Posterior cingulate gyrus (tissue), 11 donors: ENCODE measurements at regions of chr17 and their contacts with region 1.

Region 1: DNA sequence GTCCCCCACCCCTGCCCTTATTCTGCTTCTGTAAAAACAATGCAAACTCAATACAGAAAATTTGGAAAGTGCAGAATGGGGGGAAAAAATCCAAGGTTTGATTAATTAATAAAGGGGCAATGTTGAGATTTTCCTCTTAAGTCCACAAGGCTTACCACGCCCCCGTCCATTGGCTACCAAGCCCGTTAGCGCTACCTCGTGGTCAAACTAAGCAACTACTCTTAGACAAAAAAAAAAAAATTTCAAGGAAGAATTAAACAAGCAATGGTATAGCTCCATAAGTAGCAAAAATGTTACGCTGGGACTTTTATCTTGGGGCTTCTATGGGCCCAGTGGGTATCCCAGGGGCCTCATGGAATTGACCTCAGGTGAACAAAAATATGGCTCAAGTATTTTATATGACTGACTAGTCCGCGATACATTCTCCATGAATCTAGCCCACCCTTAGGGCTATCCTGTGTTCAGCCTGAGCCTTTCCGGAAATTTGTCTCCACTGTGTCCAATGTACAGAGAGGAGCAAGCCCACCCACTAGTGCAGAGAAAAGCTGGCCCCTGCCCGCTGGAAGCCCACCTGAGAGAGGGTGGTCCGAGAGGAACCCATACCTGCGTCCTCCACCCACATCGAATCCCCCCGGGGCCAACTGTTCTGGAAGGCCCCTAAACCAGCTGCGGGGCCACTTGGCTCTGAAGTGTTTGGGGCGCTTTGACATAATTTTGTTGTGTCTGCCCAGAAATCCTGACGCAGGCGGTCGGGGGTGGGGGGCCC is 19.1 kb upstream of the TEX2 start:
- DNase-seq: peak in 8 of 10 donors; percentile 21 to 91 (median 49)

Region 2: GRCh38 chr17:63919311-63919723 is 362.8 kb before region 1 on chr17:
- intact Hi-C with region 1: loop called (anchors 10 kb)
- DNase-seq: peak in 7 of 10 donors; percentile 18 to 82 (median 44)

Region 3: GRCh38 chr17:64025732-64026294 is 256.3 kb before region 1 on chr17:
- intact Hi-C with region 1: loop called (anchors 5 kb)
- DNase-seq: peak in 8 of 10 donors; percentile 24 to 86 (median 44)

Region 4: GRCh38 chr17:64155751-64156544 is 126.2 kb before region 1 on chr17:
- intact Hi-C with region 1: loop called (anchors 2 kb)
- DNase-seq: peak in 9 of 10 donors; percentile 50 to 96 (median 75)

Region 5: GRCh38 chr17:64441772-64442540 is 159.8 kb after region 1 on chr17:
- intact Hi-C with region 1: no loop called
- DNase-seq: peak in 2 of 10 donors; percentile 12 to 18